ENCODE measurements at regions of chr10 and their contacts with region 1.

Region 1: GRCh38 chr10:71696628-71697326 is 22.8 kb downstream of the C10orf105 start:
- DNase-seq: peak; percentile 83
- ATAC-seq: peak; percentile 38
- H3K4me3 Mint-ChIP-seq: no peak overlapping the region
- H3K27ac Mint-ChIP-seq: no peak overlapping the region
- H3K4me1 Mint-ChIP-seq: peaks cover 55% of the 10 kb centered on the region
- H3K27me3 Mint-ChIP-seq: no peaks in the 10 kb centered on the region
- CTCF ChIP-seq: peak; percentile 94

Region 2: GRCh38 chr10:71713135-71714030 is 16.6 kb after region 1 on chr10:
- CTCF ChIA-PET with region 1: interaction called, 189 read pairs
- POLR2A ChIA-PET with region 1: interaction called, 10 read pairs
- intact Hi-C with region 1: no loop called
- DNase-seq: peak; percentile 61
- ATAC-seq: peak; percentile 61
- H3K4me3 Mint-ChIP-seq: peak overlapping the region; percentile 70
- H3K27ac Mint-ChIP-seq: peak overlapping the region; percentile 96
- H3K4me1 Mint-ChIP-seq: peaks cover 65% of the 10 kb centered on the region
- H3K27me3 Mint-ChIP-seq: no peaks in the 10 kb centered on the region
- CTCF ChIP-seq: no peak

Region 3: DNA sequence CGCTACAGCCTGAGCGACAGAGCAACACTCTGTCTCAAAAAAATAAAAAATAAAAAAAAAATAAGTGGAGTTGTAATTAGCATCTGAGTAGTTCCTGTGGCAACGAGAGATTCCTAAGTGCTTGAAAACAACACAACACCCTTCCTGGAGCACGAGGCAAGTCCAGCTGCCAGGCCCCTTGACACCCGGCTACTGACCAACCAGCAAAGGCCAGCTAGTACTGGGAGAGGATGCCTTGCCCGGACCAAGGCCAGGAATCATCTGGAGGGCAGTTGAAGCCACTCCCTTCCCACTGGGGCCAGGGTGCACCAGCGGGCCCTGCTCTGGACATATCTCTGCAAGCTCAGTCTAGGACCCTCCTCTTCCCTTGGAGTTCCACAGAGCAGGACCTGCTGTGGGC is 22.3 kb after region 1 on chr10:
- CTCF ChIA-PET with region 1: interaction called, 189 read pairs
- POLR2A ChIA-PET with region 1: interaction called, 10 read pairs
- intact Hi-C with region 1: no loop called
- DNase-seq: no peak
- ATAC-seq: no peak
- H3K4me3 Mint-ChIP-seq: no peak overlapping the region
- H3K27ac Mint-ChIP-seq: no peak overlapping the region
- H3K4me1 Mint-ChIP-seq: peaks cover 47% of the 10 kb centered on the region
- H3K27me3 Mint-ChIP-seq: no peaks in the 10 kb centered on the region
- CTCF ChIP-seq: no peak

Region 4: DNA sequence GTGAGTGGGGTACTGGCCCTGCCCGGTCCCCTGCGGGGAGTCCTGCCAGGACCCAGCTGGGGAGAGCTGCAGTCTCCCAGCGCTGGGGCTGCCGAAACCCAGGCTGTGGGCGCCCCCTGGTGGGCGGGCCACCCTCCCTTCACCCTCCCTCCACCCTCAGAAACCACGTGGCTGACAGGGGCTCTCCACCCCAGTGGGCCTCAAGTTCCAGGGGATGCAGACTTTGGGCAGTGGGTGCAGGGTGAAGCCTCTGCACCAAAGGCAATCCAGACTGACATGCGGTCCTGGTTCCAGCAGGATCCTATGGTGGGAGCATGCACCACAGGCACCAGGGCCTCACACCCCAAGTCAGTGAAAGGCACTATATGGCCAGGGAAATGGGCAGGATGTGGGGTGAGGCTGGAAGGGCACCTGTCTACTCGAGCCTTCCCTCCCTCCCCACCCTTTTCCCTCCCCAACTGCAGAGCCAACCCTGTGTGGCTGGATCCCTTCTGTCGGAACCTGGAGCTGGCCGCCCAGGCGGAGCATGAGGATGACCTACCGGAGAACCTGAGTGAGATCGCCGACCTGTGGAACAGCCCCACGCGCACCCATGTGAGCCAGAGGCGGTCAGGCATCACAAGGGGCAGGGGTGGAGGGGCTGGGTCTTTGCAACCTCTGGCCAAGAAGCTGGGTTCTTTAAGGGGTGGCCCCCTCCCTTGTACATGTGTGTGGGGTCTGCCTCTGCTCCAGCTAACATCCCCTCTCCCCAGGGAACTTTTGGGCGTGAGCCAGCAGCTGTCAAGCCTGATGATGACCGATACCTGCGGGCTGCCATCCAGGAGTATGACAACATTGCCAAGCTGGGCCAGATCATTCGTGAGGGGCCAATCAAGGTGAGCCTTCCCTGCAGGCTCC is 115.5 kb after region 1 on chr10:
- CTCF ChIA-PET with region 1: interaction called, 29 read pairs
- POLR2A ChIA-PET with region 1: interaction called, 3 read pairs
- intact Hi-C with region 1: no loop called
- DNase-seq: peak; percentile 84
- ATAC-seq: peak; percentile 98
- H3K4me3 Mint-ChIP-seq: no peak overlapping the region
- H3K27ac Mint-ChIP-seq: no peak overlapping the region
- H3K4me1 Mint-ChIP-seq: peaks cover 3% of the 10 kb centered on the region
- H3K27me3 Mint-ChIP-seq: no peaks in the 10 kb centered on the region
- CTCF ChIP-seq: peak; percentile 94

Measured in activated CD8-positive, alpha-beta T cell treated with anti-CD3 and anti-CD28 coated beads for 36 hours (primary cell).